A549 (cell line): ENCODE measurements at regions of chr5 and their contacts with region 1.

Region 1: DNA sequence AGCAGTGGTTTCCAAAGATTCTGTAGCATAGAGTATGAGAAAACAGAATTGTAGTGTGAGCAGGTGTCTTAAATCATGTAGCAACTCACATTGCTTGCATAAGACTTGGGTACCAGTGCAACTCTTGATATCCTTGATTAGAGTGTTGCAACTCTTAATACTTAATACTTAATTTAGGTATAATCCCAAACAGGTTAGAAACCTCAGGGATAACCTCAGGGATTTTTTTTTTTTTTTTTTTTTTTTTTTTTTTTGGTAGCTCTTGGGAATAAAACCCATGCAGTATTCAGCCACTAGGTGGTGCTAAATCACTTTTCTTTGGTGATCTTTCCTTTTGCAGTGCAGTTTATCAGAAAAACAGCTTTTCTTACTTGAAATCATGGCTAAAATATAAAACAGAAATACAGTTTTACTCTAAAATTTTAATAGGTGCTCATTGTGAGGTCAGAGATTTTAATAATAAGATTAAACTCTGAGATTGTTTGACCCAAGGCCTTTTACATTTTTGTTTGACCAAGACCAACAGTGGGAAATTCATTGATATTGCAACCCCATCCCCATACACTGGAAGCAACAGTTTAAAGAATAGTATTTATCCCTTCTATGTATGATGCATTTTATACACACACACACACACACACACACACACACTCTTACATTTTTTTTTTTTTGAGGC is 55.3 kb downstream of the ERAP1 start:
- DNase-seq: peak; percentile 27 to 63
- ATAC-seq: peak in 1 of 2 experiments; percentile 60; a peak in 3 of 6 replicates
- H3K4me3 ChIP-seq: no peak overlapping the region
- H3K27ac ChIP-seq: no peak overlapping the region
- H3K4me1 ChIP-seq: no peaks in the 10 kb centered on the region
- CTCF ChIP-seq: peak; percentile 77
- EP300 ChIP-seq: no peak
- POLR2A ChIP-seq: no peak
- RAD21 ChIP-seq: peak; percentile 62 to 66

Region 2: GRCh38 chr5:96763026-96763425 is 10.5 kb after region 1 on chr5:
- CTCF ChIA-PET with region 1: interaction called, 16 read pairs
- POLR2A ChIA-PET with region 1: no interaction called
- DNase-seq: no peak
- ATAC-seq: no peak
- H3K4me3 ChIP-seq: no peak overlapping the region
- H3K27ac ChIP-seq: no peak overlapping the region
- H3K4me1 ChIP-seq: peaks cover 10% of the 10 kb centered on the region; the same call in 2 of the 3 replicates
- CTCF ChIP-seq: no peak
- EP300 ChIP-seq: no peak
- POLR2A ChIP-seq: no peak
- RAD21 ChIP-seq: no peak

Region 3: DNA sequence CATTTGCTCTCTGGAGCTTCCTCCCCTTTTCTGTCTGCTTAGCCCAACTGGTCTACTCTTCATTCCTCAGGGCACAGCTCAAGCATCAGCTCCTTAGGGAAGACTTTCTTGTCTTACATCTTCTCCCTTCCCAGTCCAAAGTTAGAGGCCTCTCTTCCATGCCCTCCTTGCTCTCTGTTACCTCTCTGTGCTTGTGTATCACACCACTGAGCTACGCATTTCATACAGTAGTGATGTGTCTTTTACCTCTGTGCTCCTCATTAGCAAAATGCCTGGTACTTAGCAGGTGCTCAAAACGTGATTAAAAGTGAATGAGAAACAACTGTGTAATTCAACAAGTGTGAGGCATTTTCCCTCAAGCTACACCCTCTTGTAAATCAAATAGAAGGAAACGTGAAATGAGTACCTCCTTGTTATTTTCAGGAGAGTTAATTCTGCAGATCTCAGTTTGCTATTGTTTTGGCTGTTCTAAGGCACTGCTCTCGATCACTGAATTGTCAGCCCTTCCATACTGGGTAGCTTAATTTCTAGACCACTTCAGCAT is 16.3 kb after region 1 on chr5:
- CTCF ChIA-PET with region 1: interaction called, 16 read pairs
- POLR2A ChIA-PET with region 1: no interaction called
- DNase-seq: no peak
- ATAC-seq: no peak
- H3K4me3 ChIP-seq: no peak overlapping the region
- H3K27ac ChIP-seq: no peak overlapping the region
- H3K4me1 ChIP-seq: peaks cover 10% of the 10 kb centered on the region; the same call in 2 of the 3 replicates
- CTCF ChIP-seq: no peak
- EP300 ChIP-seq: no peak
- POLR2A ChIP-seq: no peak
- RAD21 ChIP-seq: no peak

Region 4: DNA sequence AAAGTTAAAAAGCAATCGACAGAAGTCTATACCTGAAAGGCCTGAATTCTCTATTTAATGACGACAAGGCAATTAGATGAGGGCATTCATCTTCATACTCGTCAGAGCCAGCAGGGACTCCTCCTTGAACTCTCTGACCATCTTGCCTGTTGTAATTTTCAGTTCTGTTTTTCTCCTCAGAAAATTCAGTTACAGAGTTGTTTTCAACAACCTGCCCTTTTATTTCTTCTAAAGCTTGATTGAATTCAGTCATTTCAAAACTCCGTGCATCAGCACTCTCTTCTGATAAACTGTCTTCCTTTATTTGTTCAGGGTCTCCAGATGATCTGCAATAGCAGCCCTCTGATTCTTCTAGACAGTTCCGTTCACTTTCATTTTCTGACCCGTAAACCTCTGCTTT is 415.0 kb after region 1 on chr5:
- CTCF ChIA-PET with region 1: interaction called, 31 read pairs
- POLR2A ChIA-PET with region 1: no interaction called
- DNase-seq: no peak
- ATAC-seq: no peak
- H3K4me3 ChIP-seq: no peak overlapping the region
- H3K27ac ChIP-seq: no peak overlapping the region
- H3K4me1 ChIP-seq: peaks cover 9% of the 10 kb centered on the region
- CTCF ChIP-seq: no peak
- EP300 ChIP-seq: no peak
- POLR2A ChIP-seq: no peak
- RAD21 ChIP-seq: no peak